ENCODE measurements at regions of chr1 and their contacts with region 1.

Region 1: DNA sequence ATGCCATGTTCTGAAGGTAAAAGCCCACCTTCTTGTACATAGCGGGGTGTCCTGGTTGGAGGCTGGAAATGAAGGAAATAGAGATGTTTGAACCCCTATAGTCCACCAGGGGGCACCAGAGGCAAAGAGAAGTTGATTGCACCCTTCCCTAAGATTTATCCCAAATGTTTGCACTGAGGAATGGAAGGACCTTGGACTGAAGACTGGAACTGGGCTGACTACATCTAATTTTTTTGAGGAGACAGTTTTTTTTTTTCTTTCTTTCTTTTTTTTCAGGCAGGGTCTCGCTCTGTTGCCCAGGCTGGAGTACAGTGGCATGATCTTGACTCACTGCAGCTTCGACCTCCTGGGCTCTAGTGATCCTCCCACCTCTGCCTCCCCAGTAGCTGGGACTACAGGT is 55.3 kb upstream of the EIF4G3 start:
- DNase-seq: peak; percentile 42
- H3K4me3 Mint-ChIP-seq: no peak overlapping the region
- H3K27ac Mint-ChIP-seq: no peak overlapping the region
- H3K4me1 Mint-ChIP-seq: no peaks in the 10 kb centered on the region
- H3K27me3 Mint-ChIP-seq: no peaks in the 10 kb centered on the region

Region 2: GRCh38 chr1:20405893-20406604 is 826.0 kb before region 1 on chr1:
- CTCF ChIA-PET with region 1: no interaction called
- intact Hi-C with region 1: no loop called
- DNase-seq: no peak
- H3K4me3 Mint-ChIP-seq: no peak overlapping the region
- H3K27ac Mint-ChIP-seq: no peak overlapping the region
- H3K4me1 Mint-ChIP-seq: no peaks in the 10 kb centered on the region
- H3K27me3 Mint-ChIP-seq: peaks cover 26% of the 10 kb centered on the region

Region 3: DNA sequence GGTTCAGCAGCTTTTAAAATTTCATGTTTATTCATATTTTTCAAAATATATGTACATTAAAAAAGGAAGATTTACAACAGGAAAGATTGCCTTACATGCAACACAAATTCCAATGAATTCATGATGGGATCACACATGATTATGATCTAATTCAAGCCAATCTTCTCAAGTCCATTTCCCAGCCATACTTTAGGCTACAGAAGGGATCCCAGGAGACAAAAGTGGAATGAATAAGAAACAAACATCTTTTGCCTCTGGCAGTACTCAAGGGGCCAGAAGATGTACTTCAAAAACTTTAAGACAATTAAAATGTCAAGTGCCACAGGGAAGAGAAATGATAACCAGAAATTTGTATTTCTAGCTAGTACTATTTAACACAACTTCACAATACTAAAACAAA is 489.4 kb before region 1 on chr1:
- CTCF ChIA-PET with region 1: no interaction called
- intact Hi-C with region 1: no loop called
- DNase-seq: no peak
- H3K4me3 Mint-ChIP-seq: no peak overlapping the region
- H3K27ac Mint-ChIP-seq: no peak overlapping the region
- H3K4me1 Mint-ChIP-seq: no peaks in the 10 kb centered on the region
- H3K27me3 Mint-ChIP-seq: no peaks in the 10 kb centered on the region

Region 4: DNA sequence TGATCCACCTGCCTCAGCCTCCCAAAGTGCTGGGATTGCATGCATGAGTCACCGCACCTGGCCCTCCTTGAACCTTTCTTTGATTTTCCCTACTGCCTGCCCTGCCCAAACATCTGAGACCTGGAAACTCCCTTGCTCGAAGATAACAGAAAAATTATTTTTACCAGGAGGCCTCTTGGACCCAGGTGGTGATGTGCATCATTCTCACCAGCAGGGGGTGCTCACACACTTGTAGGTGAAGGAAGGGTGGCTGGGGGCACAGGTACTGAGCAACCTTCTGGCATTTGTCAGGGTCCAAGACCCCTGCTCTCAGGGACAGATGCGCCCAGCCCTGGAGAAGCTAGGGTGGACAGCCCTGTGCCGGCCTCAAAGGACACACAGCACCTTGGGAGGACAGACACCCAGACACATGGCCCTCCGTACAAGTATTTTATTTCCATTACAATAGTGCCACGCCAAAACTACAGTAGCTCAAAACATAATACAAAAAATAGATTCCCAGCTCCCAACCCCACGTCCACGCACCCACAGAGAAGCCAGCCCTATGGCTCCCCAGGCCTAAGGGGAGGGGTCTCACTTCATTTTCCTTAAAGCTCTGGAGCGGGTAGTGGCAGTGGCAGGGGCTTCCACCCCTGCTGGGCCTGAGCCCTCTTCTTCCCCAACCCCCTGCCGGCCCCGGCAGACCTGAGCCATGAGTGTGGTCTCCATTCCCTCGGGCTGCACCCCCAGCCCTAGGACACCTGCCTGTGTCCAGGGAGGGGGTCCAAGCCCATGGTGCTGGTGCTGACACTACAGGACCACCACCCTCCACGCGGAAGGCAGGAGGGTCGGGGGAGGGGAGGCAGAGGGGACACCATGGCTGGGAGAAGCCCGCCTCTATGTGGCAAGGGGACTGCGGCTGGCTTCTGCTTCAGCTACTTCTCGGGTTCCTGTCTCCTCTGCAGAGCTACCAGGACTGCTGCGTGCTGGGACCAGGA is 14.9 kb before region 1 on chr1:
- CTCF ChIA-PET with region 1: interaction called, 22 read pairs
- intact Hi-C with region 1: no loop called
- DNase-seq: peak; percentile 89
- H3K4me3 Mint-ChIP-seq: no peak overlapping the region
- H3K27ac Mint-ChIP-seq: peak overlapping the region; percentile 50
- H3K4me1 Mint-ChIP-seq: peaks cover 7% of the 10 kb centered on the region
- H3K27me3 Mint-ChIP-seq: no peaks in the 10 kb centered on the region

Region 5: DNA sequence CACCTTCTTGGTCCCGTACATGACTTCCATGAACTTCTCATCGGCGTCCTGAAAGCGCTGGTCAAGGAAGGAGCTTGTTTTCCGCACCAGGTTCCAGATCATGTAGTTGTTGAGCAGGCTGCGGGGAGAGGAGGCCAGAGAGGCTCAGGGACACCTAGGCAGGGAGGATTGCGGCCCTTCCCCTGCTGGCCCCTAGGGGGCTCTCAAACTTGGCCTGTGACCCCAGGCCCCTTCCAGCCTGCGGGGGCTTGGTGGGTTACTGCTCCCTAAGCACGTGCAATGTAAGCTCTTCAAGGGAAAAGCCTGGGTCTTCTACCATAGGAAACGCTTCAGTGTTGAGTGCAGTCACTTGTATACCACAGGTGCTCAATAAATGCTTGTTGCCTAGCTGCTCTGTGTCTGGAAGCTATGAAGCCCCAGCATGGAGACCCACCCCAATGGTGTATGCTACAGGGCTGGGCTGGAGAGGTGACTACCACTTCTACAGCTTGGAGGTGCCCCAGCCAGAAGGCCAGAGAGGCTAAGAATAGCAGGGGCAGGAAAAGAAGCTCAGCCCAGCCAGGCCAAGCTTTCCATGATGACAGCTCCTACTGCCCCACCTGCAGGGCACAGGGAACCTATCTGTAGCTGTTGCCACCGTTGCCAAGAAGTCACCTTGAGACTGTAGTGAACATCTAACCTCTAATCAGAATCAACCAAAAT is 13.1 kb after region 1 on chr1:
- CTCF ChIA-PET with region 1: interaction called, 54 read pairs
- intact Hi-C with region 1: no loop called
- DNase-seq: no peak
- H3K4me3 Mint-ChIP-seq: no peak overlapping the region
- H3K27ac Mint-ChIP-seq: no peak overlapping the region
- H3K4me1 Mint-ChIP-seq: no peaks in the 10 kb centered on the region
- H3K27me3 Mint-ChIP-seq: no peaks in the 10 kb centered on the region